CD8-positive, alpha-beta memory T cell (primary cell): ENCODE measurements at regions of chr2 and their contacts with region 1.

Region 1: DNA sequence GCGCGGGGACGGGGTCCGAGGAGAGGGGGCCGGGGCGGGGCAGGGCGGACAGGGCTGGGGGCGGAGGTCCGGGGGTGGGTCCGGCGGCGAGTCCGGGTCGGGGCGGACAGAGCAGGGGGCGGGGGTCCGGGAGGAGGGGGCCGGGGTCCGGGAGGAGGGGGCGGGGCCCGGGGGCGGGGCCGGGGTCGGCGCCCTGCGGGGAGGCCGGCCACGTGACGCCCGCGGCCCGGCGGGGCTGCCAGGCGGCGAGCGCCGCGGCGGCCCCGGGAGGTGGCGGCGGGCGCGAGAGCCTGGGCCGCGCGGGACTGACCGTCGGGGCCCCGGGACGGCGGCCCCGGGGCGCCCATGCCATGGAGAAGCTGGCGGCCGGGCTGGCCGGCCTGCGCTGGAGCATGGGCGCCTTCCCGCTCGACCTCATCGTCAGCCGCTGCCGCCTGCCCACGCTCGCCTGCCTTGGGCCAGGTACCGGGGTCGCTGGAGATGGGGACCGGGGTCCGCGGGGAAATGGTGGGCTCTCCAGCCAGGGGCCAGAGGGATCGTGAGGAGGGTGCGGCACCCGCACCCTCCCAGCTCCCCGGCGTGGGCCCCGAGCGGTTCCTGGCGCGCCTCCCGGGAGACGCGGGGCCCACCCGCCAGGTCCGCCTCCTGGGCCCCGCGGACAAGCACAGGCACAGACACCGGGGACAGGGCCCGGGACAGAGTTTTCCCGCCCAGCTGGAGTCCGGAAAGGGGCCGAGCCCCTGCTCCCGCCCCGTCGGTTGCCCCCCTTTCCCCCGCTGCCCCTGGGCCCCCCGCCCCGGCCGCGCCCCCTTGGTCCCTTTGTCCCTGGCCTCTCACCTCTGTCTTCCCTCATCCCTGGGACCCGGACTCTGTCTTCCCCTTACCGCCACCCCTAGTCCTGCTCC is at the start of gene GAREM2:
- DNase-seq: no peak
- H3K4me3 ChIP-seq: no peak within 1 kb of the TSS
- H3K4me3 Mint-ChIP-seq: peak within 1 kb of the TSS; percentile 62 to 90 (median 79)
- H3K27ac ChIP-seq: no peak within 1 kb of the TSS
- H3K27ac Mint-ChIP-seq: peak within 1 kb of the TSS in 1 of 8 donors; percentile 59
- H3K4me1 ChIP-seq: no peaks in the 10 kb centered on the region
- H3K4me1 Mint-ChIP-seq: peaks cover 15 to 16% (median 15%) of the 10 kb centered on the region in 3 donors
- H3K27me3 ChIP-seq: peaks cover 12% of the 10 kb centered on the region
- H3K27me3 Mint-ChIP-seq: peaks cover 19 to 41% of the 10 kb centered on the region in 2 donors
- total RNA-seq, gene GAREM2: 3.2 to 3.3 TPM

Region 2: GRCh38 chr2:26025509-26025908 is 147.6 kb before region 1 on chr2:
- CTCF ChIA-PET with region 1: no interaction called
- POLR2A ChIA-PET with region 1: no interaction called
- DNase-seq: no peak
- H3K4me3 ChIP-seq: no peak overlapping the region
- H3K4me3 Mint-ChIP-seq: peak overlapping the region in 1 of 7 donors; percentile 21
- H3K27ac ChIP-seq: no peak overlapping the region
- H3K27ac Mint-ChIP-seq: no peak overlapping the region
- H3K4me1 ChIP-seq: no peaks in the 10 kb centered on the region
- H3K4me1 Mint-ChIP-seq: no peaks in the 10 kb centered on the region
- H3K27me3 ChIP-seq: no peaks in the 10 kb centered on the region
- H3K27me3 Mint-ChIP-seq: peaks cover 3 to 9% of the 10 kb centered on the region in 2 donors

Region 3: GRCh38 chr2:26144953-26145680 is 28.0 kb before region 1 on chr2:
- CTCF ChIA-PET with region 1: no interaction called
- POLR2A ChIA-PET with region 1: no interaction called
- DNase-seq: peak; percentile 27 to 70 (median 42)
- H3K4me3 ChIP-seq: no peak overlapping the region
- H3K4me3 Mint-ChIP-seq: no peak overlapping the region
- H3K27ac ChIP-seq: no peak overlapping the region
- H3K27ac Mint-ChIP-seq: no peak overlapping the region
- H3K4me1 ChIP-seq: no peaks in the 10 kb centered on the region
- H3K4me1 Mint-ChIP-seq: no peaks in the 10 kb centered on the region
- H3K27me3 ChIP-seq: peaks cover under 1% of the 10 kb centered on the region
- H3K27me3 Mint-ChIP-seq: peaks cover 3 to 12% of the 10 kb centered on the region in 2 donors

Region 4: GRCh38 chr2:26184555-26185303 is 11.6 kb after region 1 on chr2:
- CTCF ChIA-PET with region 1: interaction called, 17 read pairs
- POLR2A ChIA-PET with region 1: interaction called, 6 read pairs
- DNase-seq: peak; percentile 76 to 89 (median 85)
- H3K4me3 ChIP-seq: peak overlapping the region; percentile 63
- H3K4me3 Mint-ChIP-seq: peak overlapping the region; percentile 82 to 93 (median 84)
- H3K27ac ChIP-seq: peak overlapping the region; percentile 57
- H3K27ac Mint-ChIP-seq: peak overlapping the region in 2 of 8 donors; percentile 46 to 59
- H3K4me1 ChIP-seq: peaks cover 8% of the 10 kb centered on the region
- H3K4me1 Mint-ChIP-seq: peaks cover 15 to 41% (median 35%) of the 10 kb centered on the region in 3 donors
- H3K27me3 ChIP-seq: no peaks in the 10 kb centered on the region
- H3K27me3 Mint-ChIP-seq: peaks cover 6 to 11% of the 10 kb centered on the region in 2 donors